Psoas muscle (tissue), 8 donors: ENCODE measurements at regions of chr3 and their contacts with region 1.

Region 1: GRCh38 chr3:150414959-150415358 is 6.9 kb downstream of the TSC22D2 start:
- DNase-seq: no peak
- ATAC-seq: no peak
- H3K4me3 ChIP-seq: peak overlapping the region; percentile 88
- H3K27ac ChIP-seq: no peak overlapping the region
- H3K4me1 ChIP-seq: peaks cover 71% of the 10 kb centered on the region
- H3K27me3 ChIP-seq: no peaks in the 10 kb centered on the region
- CTCF ChIP-seq: no peak

Region 2: GRCh38 chr3:150238998-150239619 is 175.8 kb before region 1 on chr3:
- intact Hi-C with region 1: loop called in 1 of 2 experiments (anchors 5 kb)
- DNase-seq: no peak
- ATAC-seq: no peak
- H3K4me3 ChIP-seq: no peak overlapping the region
- H3K27ac ChIP-seq: no peak overlapping the region
- H3K4me1 ChIP-seq: peaks cover 36% of the 10 kb centered on the region
- H3K27me3 ChIP-seq: no peaks in the 10 kb centered on the region
- CTCF ChIP-seq: peak; percentile 13

Region 3: GRCh38 chr3:150458001-150458400 is 43.0 kb after region 1 on chr3:
- intact Hi-C with region 1: loop called (anchors 5 kb)
- DNase-seq: no peak
- ATAC-seq: no peak
- H3K4me3 ChIP-seq: no peak overlapping the region
- H3K27ac ChIP-seq: no peak overlapping the region
- H3K4me1 ChIP-seq: peaks cover 22% of the 10 kb centered on the region
- H3K27me3 ChIP-seq: no peaks in the 10 kb centered on the region
- CTCF ChIP-seq: no peak

Region 4: GRCh38 chr3:150515210-150515609 is 100.3 kb after region 1 on chr3:
- intact Hi-C with region 1: no loop called
- DNase-seq: no peak
- ATAC-seq: no peak
- H3K4me3 ChIP-seq: no peak overlapping the region
- H3K27ac ChIP-seq: no peak overlapping the region
- H3K4me1 ChIP-seq: no peaks in the 10 kb centered on the region
- H3K27me3 ChIP-seq: no peaks in the 10 kb centered on the region
- CTCF ChIP-seq: no peak